ENCODE measurements at regions of chr4 and their contacts with region 1.

Region 1: DNA sequence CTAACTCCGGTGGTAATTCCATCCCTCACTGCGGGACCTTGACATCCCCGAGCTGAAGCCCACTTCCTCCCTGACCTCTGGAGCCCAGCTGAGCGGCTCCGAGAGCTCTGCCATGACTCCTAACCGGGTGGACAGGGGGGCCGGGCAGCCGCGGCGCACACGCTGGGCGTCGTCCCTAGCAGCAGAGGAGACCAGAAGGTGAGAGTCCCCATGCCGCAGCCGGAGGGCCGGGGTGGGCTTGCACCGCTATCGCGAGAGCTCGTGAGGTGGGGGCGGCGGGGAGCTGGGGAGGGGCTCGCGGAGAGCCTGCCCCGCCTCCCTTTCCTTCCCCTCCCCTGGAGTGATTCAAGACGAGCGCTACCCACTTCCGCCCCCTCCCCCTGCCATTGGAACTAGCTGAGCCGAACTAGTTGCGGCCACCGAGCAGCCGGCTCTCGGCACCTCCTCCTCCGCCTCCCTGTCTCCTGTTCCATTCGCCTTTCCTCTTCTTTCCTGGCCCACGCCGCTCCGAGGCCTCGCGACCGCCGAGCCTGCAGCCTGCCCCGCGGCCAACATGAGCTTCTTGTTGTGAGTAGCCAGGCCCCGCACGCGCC is at the start of gene MOB1B:
- DNase-seq: peak; percentile 96
- H3K4me3 ChIP-seq: peak within 1 kb of the TSS; percentile 70 to 83 (median 74)
- H3K27ac ChIP-seq: peak within 1 kb of the TSS; percentile 84 to 89 (median 87)
- H3K4me1 ChIP-seq: peaks cover 0 to 30% (median 21%) of the 10 kb centered on the region in 4 donors
- H3K27me3 ChIP-seq: no peaks in the 10 kb centered on the region
- CTCF ChIP-seq: peak in 1 of 3 experiments; percentile 59
- EP300 ChIP-seq: no peak
- POLR2A ChIP-seq: no peak
- total RNA-seq, gene MOB1B: 15.0 to 19.4 (median 16.6) TPM

Region 2: GRCh38 chr4:70062000-70062399 is 840.1 kb before region 1 on chr4:
- intact Hi-C with region 1: no loop called
- DNase-seq: no peak
- H3K4me3 ChIP-seq: no peak overlapping the region
- H3K27ac ChIP-seq: no peak overlapping the region
- H3K4me1 ChIP-seq: no peaks in the 10 kb centered on the region
- H3K27me3 ChIP-seq: no peaks in the 10 kb centered on the region
- CTCF ChIP-seq: no peak
- EP300 ChIP-seq: no peak
- POLR2A ChIP-seq: no peak

Region 3: GRCh38 chr4:70885174-70885573 is 16.9 kb before region 1 on chr4:
- intact Hi-C with region 1: no loop called
- DNase-seq: no peak
- H3K4me3 ChIP-seq: no peak overlapping the region
- H3K27ac ChIP-seq: no peak overlapping the region
- H3K4me1 ChIP-seq: no peaks in the 10 kb centered on the region
- H3K27me3 ChIP-seq: no peaks in the 10 kb centered on the region
- CTCF ChIP-seq: peak in 1 of 3 experiments; percentile 10
- EP300 ChIP-seq: no peak
- POLR2A ChIP-seq: no peak

Region 4: GRCh38 chr4:70993181-70994068 is 91.3 kb after region 1 on chr4 and contains the start of gene DCK:
- intact Hi-C with region 1: loop called (anchors 5 kb)
- DNase-seq: peak; percentile 97
- H3K4me3 ChIP-seq: peak within 1 kb of the TSS; percentile 78 to 88 (median 80)
- H3K27ac ChIP-seq: peak within 1 kb of the TSS; percentile 85 to 90 (median 87)
- H3K4me1 ChIP-seq: peaks cover 11 to 47% (median 38%) of the 10 kb centered on the region in 4 donors
- H3K27me3 ChIP-seq: no peaks in the 10 kb centered on the region
- CTCF ChIP-seq: no peak
- EP300 ChIP-seq: no peak
- POLR2A ChIP-seq: no peak
- total RNA-seq, gene DCK: 13.7 to 16.8 (median 14.8) TPM